ENCODE measurements at regions of chr12 and their contacts with region 1.

Region 1: DNA sequence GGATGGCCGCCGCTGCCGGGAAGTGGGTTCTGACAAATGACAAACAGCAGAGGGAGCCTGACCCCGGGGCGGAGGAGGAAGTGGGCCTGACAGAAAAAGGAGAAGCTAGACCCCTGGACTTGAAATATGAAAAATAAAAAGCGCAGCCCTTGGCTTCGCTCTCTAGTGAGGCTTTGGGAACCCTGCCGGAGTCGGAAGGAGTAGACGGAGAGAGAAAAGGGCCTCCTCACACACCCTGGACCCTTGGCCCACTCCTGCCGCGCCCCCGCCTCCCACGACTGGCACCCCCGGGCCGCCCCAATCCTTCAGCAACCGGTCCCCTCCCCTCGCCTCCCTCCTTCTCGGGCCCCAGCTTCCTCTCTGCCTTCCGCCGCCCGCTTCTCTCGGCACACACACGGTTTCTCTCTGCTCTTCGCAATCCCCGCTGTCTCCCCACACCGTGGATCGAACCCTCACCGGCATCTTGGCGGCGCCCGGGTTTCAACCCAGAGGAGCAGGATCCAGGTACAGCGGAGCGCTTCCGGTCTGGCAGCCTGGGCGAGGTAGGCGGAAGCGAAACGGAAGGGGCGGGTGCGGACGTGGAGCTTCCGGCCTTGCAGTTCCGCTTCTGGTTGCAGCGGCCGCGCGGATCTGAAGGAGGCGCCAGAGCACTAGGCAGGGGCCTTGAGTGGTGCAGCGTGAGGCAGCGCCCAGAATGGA is at the start of gene ARPC3:
- DNase-seq: peak; percentile 97 to 98 (median 98)
- ATAC-seq: peak; percentile 99
- H3K4me3 ChIP-seq: peak within 1 kb of the TSS; percentile 80
- H3K4me1 ChIP-seq: peaks cover 18% of the 10 kb centered on the region
- CTCF ChIP-seq: peak; percentile 83
- total RNA-seq, gene ARPC3: 174 to 277 (median 265) TPM

Region 2: DNA sequence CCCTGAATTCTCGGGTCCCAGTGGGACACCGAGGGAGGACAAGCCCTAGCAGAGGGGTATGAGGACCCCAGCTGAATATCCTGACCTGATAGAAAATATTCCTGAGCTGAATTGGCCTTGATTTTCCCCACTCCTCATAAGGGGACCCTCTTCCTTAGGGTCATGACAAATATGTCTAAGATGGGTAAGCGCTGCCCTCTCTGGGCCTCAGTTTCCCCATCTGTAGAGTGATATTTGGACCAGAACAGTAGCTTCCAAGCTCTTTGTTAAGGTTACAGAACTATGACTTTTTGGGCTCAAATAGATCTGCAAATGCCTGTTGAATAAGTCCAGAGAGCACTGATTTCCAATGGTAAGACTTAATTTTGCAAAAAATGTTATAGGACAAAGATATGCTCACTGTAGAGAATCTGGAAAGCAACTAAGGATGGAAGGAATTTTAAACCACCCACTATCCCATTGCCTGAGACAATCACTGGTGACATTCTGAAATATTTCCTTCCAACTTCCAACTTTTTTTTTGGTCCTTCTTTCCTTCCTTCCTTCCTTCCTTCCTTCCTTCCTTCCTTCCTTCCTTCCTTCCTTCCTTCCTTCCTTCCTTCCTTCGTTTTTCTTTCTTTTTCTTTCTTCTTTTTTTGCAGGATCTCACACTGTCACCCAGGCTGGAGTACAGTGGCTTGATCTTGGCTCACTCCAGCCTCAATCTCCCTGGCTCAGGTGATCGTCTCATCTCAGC is 438.5 kb after region 1 on chr12:
- intact Hi-C with region 1: loop called in 1 of 2 experiments (anchors 10 kb)
- DNase-seq: no peak
- ATAC-seq: no peak
- H3K4me3 ChIP-seq: no peak overlapping the region
- H3K4me1 ChIP-seq: no peaks in the 10 kb centered on the region
- CTCF ChIP-seq: no peak

Measured in mucosa of descending colon (tissue), 3 donors.